Activated CD4-positive, alpha-beta T cell treated with anti-CD3 and anti-CD28 coated beads, Interleukin-2, amount 10 ng/mL, durations not matched to agents 24 days and 14 days (primary cell): ENCODE measurements at regions of chr7 and their contacts with region 1.

Region 1: DNA sequence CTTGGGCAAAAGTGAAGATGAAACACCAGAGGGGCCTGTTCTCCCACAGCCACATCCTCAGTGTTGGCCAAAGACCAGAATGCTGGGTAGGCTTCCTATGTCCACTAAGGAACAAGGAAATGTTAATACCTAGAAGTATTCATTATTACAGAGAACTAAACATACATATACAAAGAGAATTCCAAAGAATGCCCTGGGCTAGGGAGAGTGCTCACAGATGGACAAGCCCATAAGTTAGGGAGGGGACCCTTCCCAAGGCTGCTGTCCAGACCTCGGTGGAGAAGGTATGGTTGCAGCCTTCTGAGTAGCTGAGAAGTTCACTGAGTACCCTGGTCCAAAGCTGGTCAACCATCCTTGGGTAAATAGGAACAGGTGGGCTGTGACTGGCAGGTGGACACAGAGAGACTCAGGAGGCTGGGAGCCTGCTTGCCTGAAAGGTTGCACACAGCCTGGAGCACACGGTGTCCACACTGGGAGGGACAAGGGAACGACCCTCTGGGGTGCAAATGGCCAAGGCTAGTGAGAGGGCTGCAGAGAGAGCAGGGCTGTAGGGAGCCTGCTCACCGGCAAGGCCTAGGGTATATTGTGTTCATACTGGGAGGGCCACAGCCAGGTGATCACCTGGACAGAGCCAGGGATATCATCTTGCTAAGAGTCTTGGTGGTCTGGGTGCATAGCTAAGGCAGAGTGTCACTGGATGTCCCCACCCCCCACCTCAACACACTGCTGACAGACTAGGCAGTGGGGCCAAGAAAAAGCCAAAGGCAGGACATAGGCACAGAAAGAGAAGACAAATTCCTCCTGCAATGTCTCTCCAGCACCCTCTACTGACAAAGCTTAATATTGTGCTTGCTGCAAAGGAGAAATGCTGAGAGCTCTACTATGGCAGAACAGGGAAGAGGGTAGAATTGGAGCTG is 40.3 kb downstream of the CPVL start:
- DNase-seq: peak; percentile 74
- H3K4me3 Mint-ChIP-seq: no peak overlapping the region
- H3K27ac Mint-ChIP-seq: no peak overlapping the region
- H3K4me1 Mint-ChIP-seq: peaks cover 3% of the 10 kb centered on the region
- H3K27me3 Mint-ChIP-seq: peaks cover 7% of the 10 kb centered on the region

Region 2: GRCh38 chr7:28921822-28922221 is 184.2 kb before region 1 on chr7:
- intact Hi-C with region 1: loop called (anchors 1 kb)
- DNase-seq: peak; percentile 75
- H3K4me3 Mint-ChIP-seq: no peak overlapping the region
- H3K27ac Mint-ChIP-seq: no peak overlapping the region
- H3K4me1 Mint-ChIP-seq: peaks cover 14% of the 10 kb centered on the region
- H3K27me3 Mint-ChIP-seq: peaks cover 20% of the 10 kb centered on the region